ENCODE measurements at regions of chr16 and their contacts with region 1.

Region 1: DNA sequence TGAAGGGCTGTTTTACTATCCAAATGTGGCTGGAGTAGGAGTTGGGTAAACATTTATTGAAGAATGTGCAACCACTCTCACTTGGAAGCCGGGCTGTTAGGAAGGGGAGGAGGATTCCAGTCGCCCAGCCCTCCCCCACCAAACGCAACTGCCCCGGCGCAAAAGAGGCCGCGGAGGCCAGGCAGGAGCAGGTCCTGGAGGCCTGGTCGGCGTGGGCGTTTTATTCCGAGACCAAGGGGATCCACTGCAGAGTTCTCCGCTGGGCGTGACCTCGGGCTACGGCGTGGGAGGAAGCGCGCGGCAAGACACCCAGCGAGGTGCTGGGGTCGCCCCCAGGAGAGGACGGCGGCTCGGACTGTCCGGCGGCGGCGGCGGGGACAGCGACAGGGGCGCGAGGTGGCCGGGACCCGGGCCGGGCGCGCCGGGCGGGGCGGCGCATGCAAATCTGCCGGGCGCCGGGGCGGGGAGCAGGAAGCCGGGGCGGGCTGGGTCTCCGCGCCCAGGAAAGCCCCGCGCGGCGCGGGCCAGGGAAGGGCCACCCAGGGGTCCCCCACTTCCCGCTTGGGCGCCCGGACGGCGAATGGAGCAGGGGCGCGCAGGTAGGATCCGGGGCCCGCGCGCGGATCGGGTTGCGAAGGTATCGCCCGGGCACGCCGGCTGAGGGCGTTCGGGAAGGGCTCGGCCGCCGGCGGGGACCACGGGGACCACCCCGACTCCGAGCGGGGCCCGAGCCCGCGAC is at the start of gene IL4R:
- DNase-seq: peak; percentile 77
- ATAC-seq: peak; percentile 75
- H3K4me3 ChIP-seq: peak within 1 kb of the TSS; percentile 74
- H3K27ac ChIP-seq: peak within 1 kb of the TSS; percentile 95
- H3K4me1 ChIP-seq: peaks cover 26% of the 10 kb centered on the region
- H3K27me3 ChIP-seq: no peaks in the 10 kb centered on the region
- CTCF ChIP-seq: no peak
- POLR2A ChIP-seq: peak; percentile 65
- RAD21 ChIP-seq: peak; percentile 24
- total RNA-seq, gene IL4R: 6.3 and 8.3 TPM in 2 replicates

Region 2: DNA sequence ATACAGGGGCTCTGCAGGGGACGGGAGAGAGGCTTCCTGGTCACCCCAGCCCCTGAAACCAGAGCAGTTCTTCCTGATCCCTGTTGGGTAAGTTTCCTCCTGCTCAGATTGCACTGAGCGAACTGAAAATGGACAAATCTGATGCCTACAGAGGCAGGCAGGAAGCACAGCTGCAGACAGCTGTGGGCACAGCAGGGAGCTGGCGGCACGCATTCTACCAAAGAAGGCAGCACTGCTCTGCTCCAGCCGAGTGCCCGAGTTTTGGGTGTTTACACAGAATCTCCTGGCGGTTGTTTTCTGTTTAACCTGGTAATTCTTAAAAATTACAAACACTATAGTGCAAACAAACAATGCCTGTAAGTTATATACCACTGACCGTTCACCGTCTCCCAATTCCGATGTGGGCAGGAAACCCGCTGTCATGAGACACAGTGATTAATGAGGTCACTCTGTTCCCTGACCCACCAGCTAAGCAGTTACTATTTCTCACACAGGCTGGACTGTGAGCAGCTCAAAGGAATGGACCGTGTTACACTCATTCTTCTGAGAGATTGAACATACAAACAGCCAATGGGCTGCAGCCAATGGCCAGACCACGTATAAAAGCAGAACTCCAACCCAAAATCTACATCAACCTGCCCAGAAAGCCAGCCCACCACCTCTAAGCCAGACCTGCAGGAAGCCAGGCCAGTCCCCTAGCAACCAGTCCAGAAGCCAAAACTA is 70.6 kb before region 1 on chr16:
- CTCF ChIA-PET with region 1: no interaction called
- POLR2A ChIA-PET with region 1: interaction called, 4 read pairs
- dilution Hi-C with region 1: no loop called
- in situ Hi-C with region 1: loop called (anchors 5 kb)
- intact Hi-C with region 1: loop called (anchors 1 kb)
- DNase-seq: peak; percentile 98
- ATAC-seq: peak; percentile 79
- H3K4me3 ChIP-seq: peak overlapping the region; percentile 1; the same call in 1 of the 2 replicates
- H3K27ac ChIP-seq: peak overlapping the region; percentile 94
- H3K4me1 ChIP-seq: peaks cover 37% of the 10 kb centered on the region
- H3K27me3 ChIP-seq: no peaks in the 10 kb centered on the region
- CTCF ChIP-seq: peak; percentile 13; the same call in 1 of the 2 replicates
- POLR2A ChIP-seq: no peak; the same call in 1 of the 2 replicates
- RAD21 ChIP-seq: peak; percentile 18

Region 3: GRCh38 chr16:27268376-27269299 is 45.0 kb before region 1 on chr16 and contains the start of gene NSMCE1:
- CTCF ChIA-PET with region 1: no interaction called
- POLR2A ChIA-PET with region 1: no interaction called
- dilution Hi-C with region 1: no loop called
- in situ Hi-C with region 1: loop called (anchors 5 kb)
- intact Hi-C with region 1: loop called (anchors 5 kb)
- DNase-seq: peak; percentile 96
- ATAC-seq: peak; percentile 98
- H3K4me3 ChIP-seq: peak within 1 kb of the TSS; percentile 67
- H3K27ac ChIP-seq: peak within 1 kb of the TSS; percentile 94
- H3K4me1 ChIP-seq: peaks cover 4% of the 10 kb centered on the region
- H3K27me3 ChIP-seq: no peaks in the 10 kb centered on the region
- CTCF ChIP-seq: peak; percentile 19
- POLR2A ChIP-seq: peak; percentile 91
- RAD21 ChIP-seq: no peak
- total RNA-seq, gene NSMCE1: 120 and 130 TPM in 2 replicates

Region 4: GRCh38 chr16:27289669-27290068 is 23.9 kb before region 1 on chr16:
- CTCF ChIA-PET with region 1: no interaction called
- POLR2A ChIA-PET with region 1: interaction called, 13 read pairs
- dilution Hi-C with region 1: no loop called
- in situ Hi-C with region 1: no loop called
- intact Hi-C with region 1: no loop called
- DNase-seq: no peak
- ATAC-seq: no peak
- H3K4me3 ChIP-seq: no peak overlapping the region
- H3K27ac ChIP-seq: no peak overlapping the region
- H3K4me1 ChIP-seq: peaks cover 13% of the 10 kb centered on the region
- H3K27me3 ChIP-seq: no peaks in the 10 kb centered on the region
- CTCF ChIP-seq: no peak
- POLR2A ChIP-seq: no peak
- RAD21 ChIP-seq: no peak

Measured in IMR-90 (cell line).